A549 (cell line): ENCODE measurements at regions of chr17 and their contacts with region 1.

Region 1: GRCh38 chr17:82236142-82236981 is 7.5 kb downstream of the SLC16A3 start:
- DNase-seq: peak; percentile 79 to 80
- ATAC-seq: peak; percentile 2 to 17; a peak in 3 of 6 replicates
- H3K4me3 ChIP-seq: no peak overlapping the region
- H3K27ac ChIP-seq: peak overlapping the region; percentile 68 to 71
- H3K4me1 ChIP-seq: peaks cover 83% of the 10 kb centered on the region
- CTCF ChIP-seq: peak; percentile 97
- EP300 ChIP-seq: no peak
- POLR2A ChIP-seq: no peak
- RAD21 ChIP-seq: peak; percentile 92 to 95

Region 2: DNA sequence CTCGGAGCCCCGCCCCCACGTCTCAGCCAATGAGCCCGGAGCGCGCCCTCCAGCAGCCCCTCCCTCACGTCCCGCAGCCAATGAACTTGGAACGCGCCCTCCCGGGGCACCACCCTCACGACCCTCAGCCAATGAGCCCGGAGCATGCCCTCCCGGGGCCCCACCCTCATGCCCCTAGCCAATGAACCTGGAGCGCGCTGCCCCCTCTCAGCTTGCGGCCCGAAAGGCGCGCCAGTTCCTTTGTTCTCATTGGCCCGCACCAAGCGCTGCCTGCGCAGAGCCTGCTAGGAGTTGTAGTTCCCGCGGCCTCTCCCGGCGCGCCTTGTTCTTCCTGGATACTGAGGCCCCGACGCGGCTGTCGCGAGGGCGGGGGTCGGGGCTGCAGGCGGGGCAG is 213.4 kb before region 1 on chr17 and contains the start of gene LRRC45:
- CTCF ChIA-PET with region 1: no interaction called
- POLR2A ChIA-PET with region 1: no interaction called
- DNase-seq: peak; percentile 99 to 100
- ATAC-seq: peak; percentile 67 to 89
- H3K4me3 ChIP-seq: peak within 1 kb of the TSS; percentile 77
- H3K27ac ChIP-seq: peak within 1 kb of the TSS; percentile 80 to 92
- H3K4me1 ChIP-seq: peaks cover 39% of the 10 kb centered on the region
- CTCF ChIP-seq: no peak
- EP300 ChIP-seq: no peak
- POLR2A ChIP-seq: no peak
- RAD21 ChIP-seq: no peak
- polyA plus RNA-seq, gene LRRC45: 6.0 and 6.4 TPM in 2 replicates

Region 3: GRCh38 chr17:82205719-82206508 is 30.4 kb before region 1 on chr17:
- CTCF ChIA-PET with region 1: interaction called, 50 read pairs
- POLR2A ChIA-PET with region 1: interaction called, 4 read pairs
- DNase-seq: peak; percentile 91 to 94
- ATAC-seq: peak; percentile 91 to 94
- H3K4me3 ChIP-seq: no peak overlapping the region
- H3K27ac ChIP-seq: peak overlapping the region; percentile 84 to 86
- H3K4me1 ChIP-seq: peaks cover 24% of the 10 kb centered on the region
- CTCF ChIP-seq: peak; percentile 78
- EP300 ChIP-seq: no peak
- POLR2A ChIP-seq: peak; percentile 81
- RAD21 ChIP-seq: peak; percentile 72 to 75

Region 4: DNA sequence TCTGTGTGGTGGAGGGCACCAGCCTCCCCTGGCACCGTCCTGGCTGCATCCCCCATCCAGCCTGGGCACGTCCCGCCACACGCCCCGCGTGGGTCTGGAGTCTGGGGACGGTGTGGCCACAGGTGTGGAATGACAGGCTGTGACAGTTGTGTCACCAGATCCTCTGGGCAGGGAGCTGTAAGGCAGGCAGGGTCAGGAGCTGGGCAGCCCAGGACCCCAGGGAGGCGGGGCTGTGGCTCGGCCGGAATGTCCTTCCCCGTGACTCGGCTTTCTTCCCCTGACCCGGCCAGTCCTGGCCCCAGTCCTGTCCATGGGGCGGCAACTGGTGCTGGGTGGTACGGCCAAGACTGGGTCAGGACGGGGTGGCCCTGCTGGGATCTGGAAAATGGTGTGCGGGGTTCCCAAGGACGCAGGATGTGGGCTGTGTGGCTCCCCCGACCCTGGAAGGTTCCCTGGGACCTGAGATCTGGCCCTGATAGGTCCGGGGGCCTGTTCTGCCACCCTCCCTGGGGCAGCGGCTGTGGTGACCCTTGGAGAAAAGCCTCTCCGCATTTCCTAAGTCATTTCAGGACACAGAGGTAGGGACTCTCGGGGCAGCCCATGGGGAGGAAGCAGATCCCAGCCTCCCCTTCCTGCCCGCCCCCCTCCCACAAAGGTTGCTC is 10.9 kb before region 1 on chr17:
- CTCF ChIA-PET with region 1: interaction called, 23 read pairs
- POLR2A ChIA-PET with region 1: interaction called, 3 read pairs
- DNase-seq: no peak
- ATAC-seq: no peak
- H3K4me3 ChIP-seq: no peak overlapping the region
- H3K27ac ChIP-seq: peak overlapping the region in 1 of 2 experiments; percentile 36; a peak in 2 of 6 replicates
- H3K4me1 ChIP-seq: peaks cover 10% of the 10 kb centered on the region
- CTCF ChIP-seq: no peak
- EP300 ChIP-seq: no peak
- POLR2A ChIP-seq: no peak
- RAD21 ChIP-seq: no peak

Region 5: GRCh38 chr17:82267575-82268379 is 31.4 kb after region 1 on chr17:
- CTCF ChIA-PET with region 1: interaction called, 59 read pairs
- POLR2A ChIA-PET with region 1: interaction called, 5 read pairs
- DNase-seq: peak; percentile 94 to 97
- ATAC-seq: peak; percentile 93 to 94
- H3K4me3 ChIP-seq: peak overlapping the region; percentile 35
- H3K27ac ChIP-seq: peak overlapping the region; percentile 89 to 91
- H3K4me1 ChIP-seq: peaks cover 68% of the 10 kb centered on the region
- CTCF ChIP-seq: no peak
- EP300 ChIP-seq: peak in 1 of 2 experiments; percentile 54; a peak in 1 of 5 replicates
- POLR2A ChIP-seq: no peak
- RAD21 ChIP-seq: peak; percentile 29 to 43; a peak in 1 of 5 replicates

Region 6: DNA sequence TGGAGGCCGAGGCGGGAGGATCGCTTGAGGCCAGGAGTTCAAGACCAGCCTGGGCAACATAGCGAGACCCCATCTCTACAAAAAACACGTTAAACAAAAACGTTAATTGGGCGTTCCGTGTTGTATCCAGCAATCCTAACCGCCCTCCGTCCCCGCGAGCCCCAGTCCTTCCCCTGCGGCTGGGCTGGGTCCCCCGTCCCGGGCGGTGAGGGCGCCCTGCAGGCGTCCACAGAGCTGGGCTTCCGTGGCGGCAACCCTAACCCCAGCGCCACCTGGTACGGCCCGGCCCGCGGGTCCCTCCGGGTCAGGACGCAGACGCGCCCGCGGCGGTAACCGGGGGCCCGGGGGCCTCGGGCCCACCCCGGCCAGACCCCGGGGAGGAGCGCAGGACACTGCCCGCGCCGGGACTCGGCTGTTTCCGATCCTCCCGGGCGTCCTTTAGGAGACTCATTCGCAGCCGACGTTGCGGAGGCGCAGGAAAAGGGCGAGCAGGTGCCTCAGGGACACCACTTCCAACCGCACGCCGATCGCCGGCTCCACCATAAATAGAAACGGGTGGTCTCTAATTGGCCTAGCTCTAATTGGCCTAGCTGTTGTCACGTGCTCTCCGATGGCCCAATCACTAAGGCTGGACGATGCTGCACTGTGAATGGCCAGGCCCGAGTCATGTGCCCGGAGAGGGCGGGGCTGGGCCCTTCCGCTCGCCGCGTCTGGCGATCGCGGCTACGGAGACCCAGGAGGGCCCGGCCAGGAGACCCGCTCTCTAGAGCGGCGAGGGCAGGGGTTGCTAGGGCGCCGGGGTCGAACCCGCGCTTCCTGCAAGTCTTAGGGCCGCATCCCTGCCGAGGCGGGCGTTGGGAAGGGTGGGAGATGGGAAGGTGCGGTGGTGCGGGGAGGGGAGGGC is 56.1 kb after region 1 on chr17:
- CTCF ChIA-PET with region 1: interaction called, 227 read pairs
- POLR2A ChIA-PET with region 1: interaction called, 24 read pairs
- DNase-seq: peak; percentile 99 to 100
- ATAC-seq: peak; percentile 75 to 91
- H3K4me3 ChIP-seq: peak overlapping the region; percentile 93
- H3K27ac ChIP-seq: peak overlapping the region; percentile 96 to 98
- H3K4me1 ChIP-seq: peaks cover 64% of the 10 kb centered on the region
- CTCF ChIP-seq: no peak
- EP300 ChIP-seq: no peak
- POLR2A ChIP-seq: peak; percentile 95
- RAD21 ChIP-seq: peak in 1 of 2 experiments; percentile 13; a peak in 3 of 5 replicates

Region 7: DNA sequence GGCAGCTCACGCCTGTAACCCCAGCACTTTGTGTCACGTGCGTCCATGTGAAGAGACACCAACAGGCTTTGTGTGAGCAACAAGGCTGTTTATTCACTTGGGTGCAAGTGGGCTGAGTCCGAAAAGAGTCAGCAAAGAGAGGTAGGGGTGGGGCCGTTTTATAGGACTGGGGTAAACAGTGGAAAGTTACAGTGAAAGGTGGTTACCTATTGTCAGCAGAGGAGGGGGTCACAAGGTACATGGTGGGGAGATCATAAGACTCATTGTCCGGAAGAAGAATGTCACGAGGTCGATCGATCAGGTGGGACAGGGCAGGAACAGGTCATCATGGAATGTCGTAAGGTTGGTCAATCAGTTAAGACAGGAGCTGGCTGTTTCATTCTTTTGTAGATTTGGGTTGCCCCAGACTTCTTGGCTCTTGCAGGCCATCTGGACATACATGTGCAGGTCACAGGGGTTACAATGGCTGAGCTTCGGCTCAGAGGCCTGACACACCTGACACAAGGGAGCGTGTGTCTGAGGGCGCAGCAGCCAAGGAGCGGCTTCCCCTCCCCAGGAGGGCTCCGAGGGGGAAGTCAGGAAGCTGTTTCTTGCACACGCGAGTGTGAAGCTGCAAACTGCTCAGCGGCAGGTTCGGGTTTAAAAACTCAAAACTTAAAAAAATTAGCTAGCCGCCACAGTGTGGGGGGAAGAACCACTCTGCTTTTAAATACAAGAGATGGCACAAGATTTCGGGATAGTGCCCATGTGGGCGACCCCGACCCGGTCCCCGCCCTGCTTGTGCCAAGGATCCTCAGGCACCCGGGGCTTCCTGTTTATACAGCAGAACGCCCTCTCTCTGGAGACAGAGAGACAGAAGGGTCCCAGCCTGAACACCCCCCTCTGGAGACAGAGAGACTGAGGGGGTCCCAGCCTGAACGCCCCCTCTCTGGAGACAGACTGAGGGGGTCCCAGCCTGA is 110.3 kb after region 1 on chr17:
- CTCF ChIA-PET with region 1: interaction called, 22 read pairs
- POLR2A ChIA-PET with region 1: no interaction called
- DNase-seq: no peak
- ATAC-seq: no peak
- H3K4me3 ChIP-seq: no peak overlapping the region
- H3K27ac ChIP-seq: no peak overlapping the region; a peak in 1 of 6 replicates
- H3K4me1 ChIP-seq: peaks cover 15% of the 10 kb centered on the region
- CTCF ChIP-seq: no peak
- EP300 ChIP-seq: no peak
- POLR2A ChIP-seq: no peak
- RAD21 ChIP-seq: no peak